ENCODE measurements at regions of chr7 and their contacts with region 1.

Region 1: GRCh38 chr7:101804967-101805366 is 12.5 kb upstream of the CUX1 start:
- DNase-seq: peak in 1 of 2 donors; percentile 26
- ATAC-seq: peak; percentile 65

Region 2: DNA sequence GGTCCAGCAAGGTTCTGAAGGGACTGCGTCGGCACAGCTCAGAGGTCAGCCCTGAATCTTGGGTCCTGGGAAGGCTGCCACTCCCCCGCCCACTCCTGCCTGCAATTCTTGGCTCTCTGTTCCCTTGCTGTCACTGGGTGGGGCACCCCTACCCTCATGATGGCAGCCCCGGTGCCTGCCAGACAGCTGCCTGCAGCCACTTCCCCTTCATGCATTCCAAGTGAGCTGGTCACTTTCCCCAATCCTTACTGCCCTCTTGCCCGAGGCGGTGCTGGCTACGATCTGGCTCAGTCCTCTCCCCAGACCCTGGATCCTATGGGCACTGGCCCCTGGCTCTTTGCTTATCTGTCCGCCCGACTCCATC is 190.0 kb before region 1 on chr7:
- intact Hi-C with region 1: loop called in 1 of 2 experiments (anchors 10 kb)
- DNase-seq: peak in 1 of 2 donors; percentile 36
- ATAC-seq: peak; percentile 87

Region 3: GRCh38 chr7:102236592-102237287 is 431.8 kb after region 1 on chr7:
- intact Hi-C with region 1: loop called in 1 of 2 experiments (anchors 10 kb)
- DNase-seq: peak; percentile 34 to 71
- ATAC-seq: peak; percentile 94

Measured in left colon (tissue), 2 donors.